Mucosa of descending colon (tissue), 3 donors: ENCODE measurements at regions of chr11 and their contacts with region 1.

Region 1: DNA sequence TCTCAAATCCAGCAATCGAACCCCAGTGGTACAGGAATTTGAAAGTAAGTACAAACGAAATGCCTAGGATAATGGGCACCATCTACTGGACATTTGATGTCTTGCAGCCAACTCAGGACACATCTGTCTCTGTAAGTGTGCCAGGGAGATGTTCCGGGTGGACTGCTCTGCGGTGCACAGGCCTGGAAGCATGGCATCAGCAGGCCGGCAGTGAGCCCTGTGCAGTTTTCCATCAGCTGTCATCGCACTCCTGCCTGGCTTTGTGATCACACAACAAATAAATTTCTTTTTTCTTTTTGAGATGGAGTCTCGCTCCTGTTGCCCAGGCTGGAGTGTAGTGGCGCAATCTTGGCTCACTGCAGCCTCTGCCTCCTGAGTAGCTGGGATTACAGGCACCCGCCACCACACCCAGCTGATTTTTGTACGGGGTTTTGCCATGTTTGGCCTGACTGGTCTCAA is 71.0 kb downstream of the JAM3 start:
- DNase-seq: peak in 1 of 3 donors; percentile 80
- ATAC-seq: peak; percentile 86
- H3K4me3 ChIP-seq: no peak overlapping the region
- H3K4me1 ChIP-seq: peaks cover 4% of the 10 kb centered on the region
- CTCF ChIP-seq: peak; percentile 62

Region 2: GRCh38 chr11:133821776-133822175 is 318.1 kb before region 1 on chr11:
- intact Hi-C with region 1: no loop called
- DNase-seq: peak in 1 of 3 donors; percentile 56
- ATAC-seq: peak; percentile 56
- H3K4me3 ChIP-seq: no peak overlapping the region
- H3K4me1 ChIP-seq: no peaks in the 10 kb centered on the region
- CTCF ChIP-seq: no peak

Region 3: GRCh38 chr11:133927690-133928627 is 211.9 kb before region 1 on chr11:
- intact Hi-C with region 1: loop called (anchors 2 to 5 kb)
- DNase-seq: peak; percentile 66 to 87 (median 76)
- ATAC-seq: peak; percentile 91
- H3K4me3 ChIP-seq: no peak overlapping the region
- H3K4me1 ChIP-seq: peaks cover 6% of the 10 kb centered on the region
- CTCF ChIP-seq: peak; percentile 82

Region 4: GRCh38 chr11:134050541-134051383 is 89.1 kb before region 1 on chr11:
- intact Hi-C with region 1: loop called (anchors 5 kb)
- DNase-seq: peak; percentile 88 to 92 (median 91)
- ATAC-seq: peak; percentile 96
- H3K4me3 ChIP-seq: no peak overlapping the region
- H3K4me1 ChIP-seq: peaks cover 4% of the 10 kb centered on the region
- CTCF ChIP-seq: peak; percentile 75